Upper lobe of right lung (tissue), 1 donor: ENCODE measurements at regions of chr5 and their contacts with region 1.

Region 1: DNA sequence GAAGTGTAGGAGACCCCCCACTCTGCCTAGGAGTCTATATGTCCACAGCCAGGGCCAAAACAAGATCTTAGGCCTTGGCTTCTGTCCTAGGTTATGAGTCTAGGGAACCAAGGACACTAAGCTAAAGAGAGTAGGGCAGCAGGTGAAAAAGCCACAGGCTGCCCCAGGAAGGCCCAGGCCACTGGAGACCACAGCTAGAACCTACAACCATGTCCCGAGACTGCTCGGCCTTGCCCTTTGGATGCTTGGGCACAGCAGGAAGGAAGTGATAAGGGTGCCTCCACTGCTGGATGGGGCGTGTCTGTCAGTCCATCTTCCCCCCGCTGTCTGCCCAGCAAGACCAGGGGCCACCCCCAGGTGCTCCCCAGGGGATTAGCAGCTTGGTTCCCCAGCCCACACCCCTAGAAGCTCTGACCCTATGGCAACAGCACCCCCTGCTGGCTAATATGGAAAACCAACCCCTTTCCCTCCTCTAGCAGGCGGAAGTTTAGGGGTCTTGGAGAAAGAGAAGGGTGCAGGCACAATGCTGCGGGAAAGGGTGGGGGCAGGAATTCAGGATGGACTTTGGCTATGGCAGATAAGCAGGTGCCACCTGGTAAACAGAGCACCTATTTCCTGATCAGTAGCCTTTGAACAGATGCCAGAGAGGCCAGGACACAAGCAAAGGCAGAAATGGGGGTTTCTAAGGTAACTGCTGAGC is 10.5 kb upstream of the IRF1 start:
- DNase-seq: peak; percentile 77
- ATAC-seq: peak; percentile 40
- H3K4me3 ChIP-seq: no peak overlapping the region
- H3K27ac ChIP-seq: peak overlapping the region; percentile 63
- H3K4me1 ChIP-seq: peaks cover 40% of the 10 kb centered on the region
- H3K27me3 ChIP-seq: no peaks in the 10 kb centered on the region
- CTCF ChIP-seq: peak; percentile 85

Region 2: DNA sequence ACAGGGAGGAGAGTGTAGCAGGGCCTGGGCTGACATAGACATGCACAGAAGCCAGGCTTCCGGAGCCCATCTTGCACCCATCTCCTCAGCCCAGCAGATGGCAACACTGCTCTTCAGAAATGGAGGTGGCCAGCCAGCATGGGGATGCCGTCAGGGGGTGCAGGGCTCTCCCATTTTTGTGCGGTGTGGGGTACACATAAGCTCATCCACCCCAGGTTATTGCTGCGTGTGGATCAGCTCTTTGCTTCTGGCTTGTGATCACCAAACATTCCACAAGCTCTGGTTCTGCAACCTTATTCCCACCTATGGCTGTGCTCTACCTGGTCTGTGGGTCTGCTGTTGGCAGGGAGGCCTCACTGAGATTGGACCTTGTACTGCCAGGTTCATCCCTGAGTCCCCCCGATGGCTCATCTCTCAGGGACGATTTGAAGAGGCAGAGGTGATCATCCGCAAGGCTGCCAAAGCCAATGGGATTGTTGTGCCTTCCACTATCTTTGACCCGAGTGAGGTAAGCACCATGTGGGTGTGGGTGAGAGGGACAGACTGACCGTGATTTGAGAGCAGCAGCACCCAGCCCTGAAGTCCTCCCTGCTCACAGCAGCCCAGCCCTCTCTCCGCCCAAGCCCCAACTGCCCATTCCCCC is 114.3 kb before region 1 on chr5:
- intact Hi-C with region 1: loop called (anchors 5 kb)
- DNase-seq: peak; percentile 84
- ATAC-seq: peak; percentile 89
- H3K4me3 ChIP-seq: no peak overlapping the region
- H3K27ac ChIP-seq: peak overlapping the region; percentile 88
- H3K4me1 ChIP-seq: peaks cover 48% of the 10 kb centered on the region
- H3K27me3 ChIP-seq: no peaks in the 10 kb centered on the region
- CTCF ChIP-seq: peak; percentile 86

Region 3: GRCh38 chr5:132397224-132397623 is 103.9 kb before region 1 on chr5:
- intact Hi-C with region 1: no loop called
- DNase-seq: no peak
- ATAC-seq: no peak
- H3K4me3 ChIP-seq: no peak overlapping the region
- H3K27ac ChIP-seq: no peak overlapping the region
- H3K4me1 ChIP-seq: no peaks in the 10 kb centered on the region
- H3K27me3 ChIP-seq: no peaks in the 10 kb centered on the region
- CTCF ChIP-seq: no peak

Region 4: DNA sequence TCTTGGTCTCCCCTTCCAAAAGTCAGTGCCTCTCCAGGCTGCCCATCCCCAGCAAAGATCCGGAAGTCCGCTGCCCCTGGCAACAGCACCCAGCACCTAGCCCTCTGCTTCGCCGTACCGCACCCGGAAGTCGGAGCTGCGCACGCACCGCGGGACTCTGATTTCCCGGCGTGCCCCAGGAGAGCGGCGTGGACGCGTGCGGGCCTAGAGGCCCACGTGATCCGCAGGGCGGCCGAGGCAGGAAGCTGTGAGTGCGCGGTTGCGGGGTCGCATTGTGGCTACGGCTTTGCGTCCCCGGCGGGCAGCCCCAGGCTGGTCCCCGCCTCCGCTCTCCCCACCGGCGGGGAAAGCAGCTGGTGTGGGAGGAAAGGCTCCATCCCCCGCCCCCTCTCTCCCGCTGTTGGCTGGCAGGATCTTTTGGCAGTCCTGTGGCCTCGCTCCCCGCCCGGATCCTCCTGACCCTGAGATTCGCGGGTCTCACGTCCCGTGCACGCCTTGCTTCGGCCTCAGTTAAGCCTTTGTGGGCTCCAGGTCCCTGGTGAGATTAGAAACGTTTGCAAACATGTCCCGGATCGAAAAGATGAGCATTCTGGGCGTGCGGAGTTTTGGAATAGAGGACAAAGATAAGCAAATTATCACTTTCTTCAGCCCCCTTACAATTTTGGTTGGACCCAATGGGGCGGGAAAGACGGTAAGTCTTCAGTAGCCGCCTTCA is 55.8 kb after region 1 on chr5 and contains the start of gene RAD50:
- intact Hi-C with region 1: no loop called
- DNase-seq: peak; percentile 98
- ATAC-seq: peak; percentile 100
- H3K4me3 ChIP-seq: peak within 1 kb of the TSS; percentile 94
- H3K27ac ChIP-seq: peak within 1 kb of the TSS; percentile 93
- H3K4me1 ChIP-seq: peaks cover 14% of the 10 kb centered on the region
- H3K27me3 ChIP-seq: no peaks in the 10 kb centered on the region
- CTCF ChIP-seq: no peak
- total RNA-seq, gene RAD50: 32.8 TPM

Region 5: DNA sequence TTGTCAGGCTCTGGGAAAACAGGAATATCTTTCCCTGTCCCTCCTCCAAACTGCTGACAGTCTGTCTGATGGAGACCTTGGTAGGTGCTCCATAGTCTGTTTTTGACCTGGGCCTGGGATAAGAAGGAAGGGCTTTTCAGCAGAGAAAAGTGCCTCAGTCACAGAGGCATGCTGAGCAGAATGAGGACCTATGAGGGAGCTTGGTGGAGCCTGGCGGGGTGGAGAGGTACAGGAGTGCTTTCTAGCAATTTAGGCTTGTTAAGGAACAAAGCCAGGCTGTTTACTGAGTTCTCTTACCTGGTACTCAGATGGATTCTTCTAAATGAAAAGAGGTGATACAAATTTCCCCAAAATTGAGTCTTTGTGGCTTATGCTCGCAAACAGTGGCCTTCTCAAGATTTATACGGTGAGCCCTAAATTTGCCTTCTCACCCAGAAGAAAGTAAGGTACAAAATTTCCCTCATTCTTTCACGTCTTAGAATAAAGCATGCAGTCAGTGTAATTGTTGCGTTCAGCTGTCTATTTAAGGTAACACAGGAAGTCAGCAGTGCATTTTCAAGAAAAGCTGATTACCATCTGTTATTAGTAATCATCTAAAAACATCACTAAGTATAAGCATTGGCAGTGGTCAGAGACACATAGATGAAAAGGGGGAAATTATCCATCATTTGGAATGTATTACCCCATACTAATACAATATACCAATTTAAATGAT is 128.3 kb after region 1 on chr5:
- intact Hi-C with region 1: no loop called
- DNase-seq: no peak
- ATAC-seq: no peak
- H3K4me3 ChIP-seq: no peak overlapping the region
- H3K27ac ChIP-seq: no peak overlapping the region
- H3K4me1 ChIP-seq: no peaks in the 10 kb centered on the region
- H3K27me3 ChIP-seq: no peaks in the 10 kb centered on the region
- CTCF ChIP-seq: no peak